Activated CD4-positive, alpha-beta T cell treated with anti-CD3 and anti-CD28 coated beads for 36 hours (primary cell): ENCODE measurements at regions of chr7 and their contacts with region 1.

Region 1: DNA sequence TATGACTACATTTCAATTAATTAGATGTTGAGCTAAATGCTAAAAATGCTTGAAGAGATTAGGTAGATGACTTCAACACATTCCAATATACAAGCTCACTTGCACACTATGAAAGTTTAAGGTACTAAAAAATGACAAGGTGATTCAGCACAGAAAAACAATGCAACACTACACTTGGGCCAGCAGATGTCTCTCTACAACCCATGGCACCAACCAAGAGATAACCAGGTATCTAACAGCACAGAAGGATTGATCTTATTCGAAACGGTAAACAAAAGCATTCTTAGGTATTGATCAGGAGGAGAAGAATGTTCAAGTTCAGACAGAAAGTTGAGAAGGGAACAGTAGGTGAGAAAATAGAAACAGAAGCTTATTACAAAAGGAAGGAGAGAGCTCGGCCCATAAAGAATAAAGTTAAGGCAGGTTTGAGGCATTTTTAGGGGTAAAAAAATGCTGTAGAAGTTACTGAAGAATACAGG is 248.2 kb upstream of the KLF14 start:
- DNase-seq: peak; percentile 39
- ATAC-seq: peak; percentile 81
- H3K4me3 Mint-ChIP-seq: no peak overlapping the region
- H3K27ac Mint-ChIP-seq: no peak overlapping the region
- H3K4me1 Mint-ChIP-seq: peaks cover 54% of the 10 kb centered on the region
- H3K27me3 Mint-ChIP-seq: no peaks in the 10 kb centered on the region

Region 2: DNA sequence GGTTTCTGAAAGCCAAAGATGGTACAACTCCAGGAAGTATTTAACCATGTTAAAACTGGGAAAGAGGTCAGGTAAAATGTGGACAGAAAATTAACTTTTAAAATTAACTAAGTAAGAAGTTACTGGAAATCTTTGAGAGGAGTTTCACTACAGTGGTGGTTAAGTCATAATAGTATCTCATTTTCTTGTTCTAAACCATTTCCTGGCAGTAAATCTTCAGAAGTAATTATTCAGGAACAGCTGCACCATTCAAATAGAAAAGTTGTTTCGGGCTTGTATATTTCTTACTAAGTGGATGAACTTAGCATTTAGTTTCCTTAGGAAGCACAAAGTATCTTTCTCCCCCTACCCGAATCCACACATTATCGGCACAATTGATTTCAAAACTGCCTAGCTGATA is 340.7 kb before region 1 on chr7:
- CTCF ChIA-PET with region 1: no interaction called
- POLR2A ChIA-PET with region 1: no interaction called
- intact Hi-C with region 1: no loop called
- DNase-seq: no peak
- ATAC-seq: peak; percentile 86
- H3K4me3 Mint-ChIP-seq: no peak overlapping the region
- H3K27ac Mint-ChIP-seq: peak overlapping the region; percentile 72
- H3K4me1 Mint-ChIP-seq: peaks cover 17% of the 10 kb centered on the region
- H3K27me3 Mint-ChIP-seq: no peaks in the 10 kb centered on the region

Region 3: GRCh38 chr7:130896898-130897514 is 85.2 kb before region 1 on chr7:
- CTCF ChIA-PET with region 1: interaction called, 10 read pairs
- POLR2A ChIA-PET with region 1: no interaction called
- intact Hi-C with region 1: no loop called
- DNase-seq: peak; percentile 87
- ATAC-seq: peak; percentile 56
- H3K4me3 Mint-ChIP-seq: peak overlapping the region; percentile 22
- H3K27ac Mint-ChIP-seq: peak overlapping the region; percentile 88
- H3K4me1 Mint-ChIP-seq: peaks cover 94% of the 10 kb centered on the region
- H3K27me3 Mint-ChIP-seq: no peaks in the 10 kb centered on the region

Region 4: DNA sequence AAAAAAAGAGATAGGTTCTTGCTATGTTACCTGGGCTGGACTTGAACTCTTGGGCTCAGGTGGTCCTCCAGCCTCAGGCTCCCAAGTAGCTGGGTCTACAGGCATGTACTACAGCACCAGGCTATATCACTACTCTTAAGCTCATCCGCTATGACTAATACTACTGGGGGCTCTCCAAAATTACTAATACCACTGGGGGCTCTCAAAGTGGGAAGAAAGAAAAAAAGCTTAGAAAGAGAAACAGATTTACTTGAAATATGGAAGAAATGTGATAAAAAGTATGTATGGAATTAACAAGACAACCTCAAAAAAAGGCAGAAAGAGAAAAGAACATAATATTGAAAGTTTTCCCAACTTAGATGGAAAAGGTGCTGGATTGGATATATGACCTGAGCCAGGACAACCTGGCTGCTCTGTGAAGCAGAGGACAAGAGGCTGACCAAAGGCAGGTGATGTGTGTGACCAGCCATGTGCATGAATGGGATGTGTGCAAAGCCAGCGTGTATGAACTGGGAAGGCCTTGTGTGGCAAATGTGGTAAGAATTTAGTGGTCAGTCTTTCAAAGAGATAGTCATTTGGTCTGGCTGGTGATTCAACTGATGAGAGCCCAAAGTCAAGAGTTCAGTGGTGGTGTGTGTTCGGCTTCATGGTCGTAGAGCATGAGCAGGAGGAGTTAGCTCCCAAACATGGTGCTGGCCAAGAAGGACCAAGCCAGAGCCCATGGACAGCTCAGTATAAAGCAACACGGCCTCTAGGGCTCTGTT is 15.8 kb before region 1 on chr7:
- CTCF ChIA-PET with region 1: interaction called, 56 read pairs
- POLR2A ChIA-PET with region 1: interaction called, 13 read pairs
- intact Hi-C with region 1: no loop called
- DNase-seq: peak; percentile 39
- ATAC-seq: peak; percentile 3
- H3K4me3 Mint-ChIP-seq: peak overlapping the region; percentile 11
- H3K27ac Mint-ChIP-seq: peak overlapping the region; percentile 87
- H3K4me1 Mint-ChIP-seq: peaks cover 73% of the 10 kb centered on the region
- H3K27me3 Mint-ChIP-seq: no peaks in the 10 kb centered on the region

Region 5: GRCh38 chr7:131007394-131008330 is 25.5 kb after region 1 on chr7:
- CTCF ChIA-PET with region 1: interaction called, 144 read pairs
- POLR2A ChIA-PET with region 1: interaction called, 3 read pairs
- intact Hi-C with region 1: loop called (anchors 1 kb)
- DNase-seq: peak; percentile 80
- ATAC-seq: peak; percentile 27
- H3K4me3 Mint-ChIP-seq: peak overlapping the region; percentile 68
- H3K27ac Mint-ChIP-seq: peak overlapping the region; percentile 96
- H3K4me1 Mint-ChIP-seq: peaks cover 90% of the 10 kb centered on the region
- H3K27me3 Mint-ChIP-seq: no peaks in the 10 kb centered on the region

Region 6: DNA sequence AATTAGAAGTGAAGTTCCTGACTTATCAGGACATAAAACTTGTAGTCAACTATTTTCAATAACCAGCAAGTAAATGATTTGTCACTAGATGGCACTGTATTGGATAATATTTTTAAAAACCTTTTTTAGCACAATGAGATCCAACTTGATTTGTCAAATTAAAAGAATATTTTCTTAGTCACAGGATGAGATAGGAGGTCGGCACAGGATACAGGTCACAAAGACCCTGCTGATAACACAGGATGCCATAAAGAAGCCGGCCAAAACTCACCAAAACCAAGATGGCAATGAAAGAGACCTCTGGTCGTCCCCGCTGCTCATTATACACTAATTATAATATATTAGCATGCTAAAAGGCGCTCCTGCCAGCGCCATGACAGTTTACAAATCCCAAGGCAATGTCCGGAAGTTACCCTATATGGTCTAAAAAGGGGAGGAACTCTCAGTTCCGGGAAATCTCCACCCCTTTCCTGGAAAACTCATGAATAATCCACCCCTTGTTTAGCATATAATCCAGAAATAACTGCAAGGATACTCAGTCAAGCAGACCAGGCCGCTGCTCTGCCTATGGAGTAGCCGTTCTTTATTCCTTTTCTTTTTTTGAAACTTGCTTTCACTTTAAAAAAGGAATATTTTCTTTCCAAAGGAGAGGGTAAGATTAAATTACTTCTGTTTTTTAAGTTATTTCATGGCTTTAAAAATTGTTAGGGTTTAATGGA is 89.7 kb after region 1 on chr7:
- CTCF ChIA-PET with region 1: interaction called, 11 read pairs
- POLR2A ChIA-PET with region 1: interaction called, 3 read pairs
- intact Hi-C with region 1: no loop called
- DNase-seq: peak; percentile 22
- ATAC-seq: no peak
- H3K4me3 Mint-ChIP-seq: no peak overlapping the region
- H3K27ac Mint-ChIP-seq: peak overlapping the region; percentile 70
- H3K4me1 Mint-ChIP-seq: peaks cover 78% of the 10 kb centered on the region
- H3K27me3 Mint-ChIP-seq: no peaks in the 10 kb centered on the region

Region 7: DNA sequence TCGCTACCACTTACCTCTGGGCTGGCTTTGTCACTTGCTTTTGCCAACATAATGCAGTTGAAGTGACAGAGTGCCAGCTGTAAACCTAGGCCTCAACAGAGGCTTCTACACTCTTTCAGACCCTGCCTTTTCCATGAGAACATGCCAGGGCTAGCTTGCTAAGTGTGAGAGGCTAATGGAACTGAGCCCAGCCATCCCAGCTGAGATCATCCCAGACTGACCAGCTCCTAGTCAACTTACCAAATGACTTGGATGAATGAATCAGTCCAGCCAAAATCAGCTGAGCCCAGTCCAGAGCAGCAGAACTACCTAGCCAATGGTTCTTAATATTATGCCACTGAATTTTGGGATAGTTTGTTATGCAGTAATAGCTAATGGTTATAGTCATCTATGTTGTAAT is 310.8 kb after region 1 on chr7:
- CTCF ChIA-PET with region 1: no interaction called
- POLR2A ChIA-PET with region 1: no interaction called
- intact Hi-C with region 1: no loop called
- DNase-seq: no peak
- ATAC-seq: no peak
- H3K4me3 Mint-ChIP-seq: no peak overlapping the region
- H3K27ac Mint-ChIP-seq: no peak overlapping the region
- H3K4me1 Mint-ChIP-seq: no peaks in the 10 kb centered on the region
- H3K27me3 Mint-ChIP-seq: no peaks in the 10 kb centered on the region

Region 8: DNA sequence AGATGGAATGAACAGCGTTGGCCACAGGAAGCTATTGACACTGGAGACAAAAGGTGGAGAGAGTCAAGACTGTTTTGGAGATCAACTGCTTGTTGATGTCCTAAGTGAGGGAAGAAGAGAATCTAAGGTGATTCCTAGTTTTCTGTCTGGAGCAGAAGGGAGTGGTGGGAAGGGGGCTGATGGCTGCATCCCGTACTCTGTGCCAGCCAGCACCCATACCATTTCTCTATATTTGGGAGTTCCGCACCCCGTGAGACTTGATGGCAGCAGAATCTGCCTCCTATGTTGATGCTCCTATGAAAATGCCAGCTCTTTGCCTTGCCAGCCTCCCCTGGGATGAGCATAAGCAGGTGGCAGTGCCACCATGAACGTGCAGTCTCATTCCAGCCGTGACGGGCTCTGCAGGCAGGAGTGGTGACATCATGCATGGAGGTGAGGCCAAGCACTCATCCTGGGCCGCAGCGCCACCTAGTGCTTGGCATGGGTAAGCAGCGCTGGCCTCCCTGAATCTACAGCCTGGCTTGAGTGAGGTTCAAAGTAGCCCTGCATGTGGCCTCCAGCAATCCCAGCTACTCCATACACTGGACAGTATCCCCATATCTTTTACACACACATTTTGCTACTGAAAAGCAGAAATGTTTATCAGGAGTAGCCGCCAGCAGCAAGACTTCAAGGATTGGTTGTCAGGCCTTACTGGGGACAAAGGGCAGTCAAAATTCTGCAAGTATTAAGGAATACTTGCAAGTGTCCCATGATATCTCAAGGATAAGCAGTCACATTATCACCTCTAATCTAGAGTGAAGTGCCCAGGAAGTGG is 531.3 kb after region 1 on chr7:
- CTCF ChIA-PET with region 1: interaction called, 3 read pairs
- POLR2A ChIA-PET with region 1: no interaction called
- intact Hi-C with region 1: loop called in 1 of 2 experiments (anchors 2 kb)
- DNase-seq: peak; percentile 92
- ATAC-seq: peak; percentile 99
- H3K4me3 Mint-ChIP-seq: no peak overlapping the region
- H3K27ac Mint-ChIP-seq: no peak overlapping the region
- H3K4me1 Mint-ChIP-seq: peaks cover 6% of the 10 kb centered on the region
- H3K27me3 Mint-ChIP-seq: peaks cover 9% of the 10 kb centered on the region